ENCODE measurements at regions of chr3 and their contacts with region 1.

Region 1: DNA sequence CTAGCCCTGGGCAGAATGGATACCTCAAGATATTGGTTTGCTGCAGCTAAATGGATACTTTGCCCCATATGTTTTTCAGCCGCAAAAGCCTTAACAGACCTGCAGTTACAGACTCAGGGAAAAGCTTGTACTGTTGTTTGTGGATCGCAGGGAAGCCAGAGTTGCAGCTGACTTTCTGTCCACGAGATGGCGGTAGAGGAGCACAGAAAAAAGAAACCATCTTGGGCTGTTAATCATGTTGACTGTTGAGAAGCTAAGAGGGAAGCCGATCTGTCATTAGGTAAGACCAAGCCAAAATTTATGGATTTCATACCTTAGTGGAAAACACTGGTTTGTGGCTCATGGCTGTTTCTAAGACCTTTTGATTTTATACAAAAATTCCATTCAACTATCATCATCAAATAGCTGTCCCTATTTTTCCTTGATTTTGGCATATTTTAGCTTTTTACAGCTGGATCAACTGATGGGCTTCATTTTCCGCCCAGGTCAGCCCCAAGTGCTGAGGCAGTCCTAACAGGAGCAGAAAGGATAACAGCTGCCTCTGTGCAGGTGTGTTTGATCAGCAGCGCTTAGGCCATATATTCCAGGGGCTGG is 205.7 kb upstream of the ZPLD1 start:
- DNase-seq: peak; percentile 79
- H3K4me3 Mint-ChIP-seq: no peak overlapping the region
- H3K27ac Mint-ChIP-seq: no peak overlapping the region
- H3K4me1 Mint-ChIP-seq: peaks cover 19% of the 10 kb centered on the region
- H3K27me3 Mint-ChIP-seq: peaks cover 16% of the 10 kb centered on the region

Region 2: DNA sequence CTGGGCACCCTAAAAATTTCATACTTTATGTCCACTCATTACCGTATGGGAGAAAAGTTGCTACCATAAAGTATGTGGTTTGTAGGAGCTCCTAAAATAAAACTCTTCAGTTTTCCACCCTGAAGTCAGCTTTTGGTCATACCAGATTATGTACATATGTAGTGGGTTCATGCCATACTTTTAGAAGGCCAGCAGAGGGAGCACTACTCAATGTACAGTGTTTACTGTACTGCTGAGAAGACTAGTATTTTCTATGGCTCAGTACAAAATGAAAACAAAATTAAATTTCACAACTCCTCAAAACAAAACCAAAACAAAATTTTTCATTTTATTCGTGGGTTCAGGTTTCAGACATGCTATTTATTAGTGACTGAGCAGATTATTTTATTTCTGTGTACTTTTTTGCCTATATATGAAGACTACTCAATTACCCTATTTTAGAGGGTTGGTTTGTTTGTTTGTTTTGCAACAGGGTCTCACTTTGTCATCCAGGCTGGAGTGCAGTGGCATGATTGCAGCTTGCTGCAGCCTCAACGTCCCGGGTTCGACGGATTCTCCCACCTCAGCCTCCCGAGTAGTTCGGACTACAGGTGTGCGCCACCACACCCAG is 425.9 kb before region 1 on chr3:
- CTCF ChIA-PET with region 1: interaction called, 215 read pairs
- POLR2A ChIA-PET with region 1: interaction called, 18 read pairs
- DNase-seq: peak; percentile 55
- H3K4me3 Mint-ChIP-seq: no peak overlapping the region
- H3K27ac Mint-ChIP-seq: peak overlapping the region; percentile 15
- H3K4me1 Mint-ChIP-seq: peaks cover 16% of the 10 kb centered on the region
- H3K27me3 Mint-ChIP-seq: no peaks in the 10 kb centered on the region

Region 3: DNA sequence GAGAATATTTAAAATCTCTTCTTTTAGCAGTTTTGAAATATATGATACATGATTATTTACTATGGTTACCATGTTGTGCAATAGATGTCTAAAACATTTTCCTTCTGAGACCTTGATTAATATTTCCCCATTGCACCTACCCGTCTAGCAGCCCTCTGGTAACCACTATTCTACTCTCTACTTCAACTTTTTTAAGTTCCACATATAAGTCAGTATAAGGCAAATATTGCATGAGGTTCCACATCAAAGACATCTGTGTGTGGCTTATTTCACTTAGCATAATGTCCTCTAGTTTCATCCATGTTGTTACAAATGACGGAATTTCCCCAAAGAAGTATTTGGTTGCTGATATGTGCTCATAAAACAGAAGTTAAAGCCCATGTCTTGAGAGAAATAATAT is 409.4 kb before region 1 on chr3:
- CTCF ChIA-PET with region 1: interaction called, 215 read pairs
- POLR2A ChIA-PET with region 1: interaction called, 11 read pairs
- DNase-seq: no peak
- H3K4me3 Mint-ChIP-seq: no peak overlapping the region
- H3K27ac Mint-ChIP-seq: no peak overlapping the region
- H3K4me1 Mint-ChIP-seq: peaks cover 8% of the 10 kb centered on the region
- H3K27me3 Mint-ChIP-seq: no peaks in the 10 kb centered on the region

Region 4: DNA sequence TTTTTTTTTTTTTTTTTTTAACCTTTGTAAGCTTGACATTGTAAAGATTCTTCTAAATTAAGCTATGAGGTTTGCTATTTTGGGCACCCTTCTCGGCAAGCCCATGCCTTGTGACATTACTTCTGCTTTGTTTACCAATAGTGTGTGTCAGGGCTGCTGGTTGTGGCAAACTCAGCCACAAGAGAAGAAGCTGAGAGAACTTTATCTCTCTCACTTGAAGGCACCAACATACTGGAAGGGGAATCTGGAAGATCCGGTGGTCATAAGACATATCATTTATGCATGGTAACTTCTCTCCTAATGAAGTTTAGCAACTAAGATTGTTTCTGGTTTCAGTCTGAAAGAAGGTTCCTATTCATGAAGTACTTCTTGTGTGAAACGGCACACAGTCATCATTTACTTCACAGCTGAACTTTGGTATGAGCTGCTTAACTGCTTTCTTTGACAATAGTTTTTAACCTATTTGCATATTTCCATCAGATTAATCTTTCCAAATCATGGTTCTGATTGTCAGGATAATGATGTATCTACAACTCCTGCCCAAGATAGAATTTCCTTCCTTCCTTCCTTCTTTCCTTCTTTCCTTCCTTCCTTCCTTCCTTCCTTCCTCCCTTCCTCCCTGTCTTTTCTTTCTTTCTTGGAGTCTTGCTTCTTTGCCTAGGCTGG is 190.5 kb before region 1 on chr3:
- CTCF ChIA-PET with region 1: no interaction called
- POLR2A ChIA-PET with region 1: no interaction called
- DNase-seq: no peak
- H3K4me3 Mint-ChIP-seq: no peak overlapping the region
- H3K27ac Mint-ChIP-seq: no peak overlapping the region
- H3K4me1 Mint-ChIP-seq: no peaks in the 10 kb centered on the region
- H3K27me3 Mint-ChIP-seq: peaks cover 2% of the 10 kb centered on the region

Region 5: GRCh38 chr3:102169915-102170479 is 59.2 kb before region 1 on chr3:
- CTCF ChIA-PET with region 1: no interaction called
- POLR2A ChIA-PET with region 1: no interaction called
- DNase-seq: no peak
- H3K4me3 Mint-ChIP-seq: no peak overlapping the region
- H3K27ac Mint-ChIP-seq: no peak overlapping the region
- H3K4me1 Mint-ChIP-seq: no peaks in the 10 kb centered on the region
- H3K27me3 Mint-ChIP-seq: peaks cover 7% of the 10 kb centered on the region

Region 6: DNA sequence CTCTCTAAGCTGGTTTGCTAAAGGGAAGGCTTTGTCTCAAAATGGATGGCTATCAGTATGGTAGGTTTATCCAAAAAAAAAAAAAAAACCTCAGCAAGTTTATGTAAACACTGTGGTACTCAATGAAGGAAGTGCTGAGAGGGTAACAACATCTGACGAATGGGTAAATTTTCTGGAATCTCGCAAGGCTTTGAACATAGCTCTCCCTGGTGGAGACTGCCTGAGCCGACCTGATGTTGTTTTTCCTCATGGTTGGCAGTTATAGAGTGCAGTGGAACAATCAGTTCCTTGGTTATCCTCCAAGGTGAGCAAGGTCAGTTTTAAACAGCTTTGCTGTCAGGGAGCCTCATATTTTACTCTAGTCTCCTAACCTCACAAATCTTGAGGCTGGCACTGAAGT is 300.3 kb after region 1 on chr3:
- CTCF ChIA-PET with region 1: interaction called, 122 read pairs
- POLR2A ChIA-PET with region 1: no interaction called
- DNase-seq: no peak
- H3K4me3 Mint-ChIP-seq: no peak overlapping the region
- H3K27ac Mint-ChIP-seq: no peak overlapping the region
- H3K4me1 Mint-ChIP-seq: peaks cover 4% of the 10 kb centered on the region
- H3K27me3 Mint-ChIP-seq: peaks cover 2% of the 10 kb centered on the region

Region 7: GRCh38 chr3:102673271-102674115 is 444.3 kb after region 1 on chr3:
- CTCF ChIA-PET with region 1: interaction called, 20 read pairs
- POLR2A ChIA-PET with region 1: no interaction called
- DNase-seq: peak; percentile 63
- H3K4me3 Mint-ChIP-seq: no peak overlapping the region
- H3K27ac Mint-ChIP-seq: no peak overlapping the region
- H3K4me1 Mint-ChIP-seq: no peaks in the 10 kb centered on the region
- H3K27me3 Mint-ChIP-seq: no peaks in the 10 kb centered on the region